ENCODE measurements at regions of chr1 and their contacts with region 1.

Region 1: DNA sequence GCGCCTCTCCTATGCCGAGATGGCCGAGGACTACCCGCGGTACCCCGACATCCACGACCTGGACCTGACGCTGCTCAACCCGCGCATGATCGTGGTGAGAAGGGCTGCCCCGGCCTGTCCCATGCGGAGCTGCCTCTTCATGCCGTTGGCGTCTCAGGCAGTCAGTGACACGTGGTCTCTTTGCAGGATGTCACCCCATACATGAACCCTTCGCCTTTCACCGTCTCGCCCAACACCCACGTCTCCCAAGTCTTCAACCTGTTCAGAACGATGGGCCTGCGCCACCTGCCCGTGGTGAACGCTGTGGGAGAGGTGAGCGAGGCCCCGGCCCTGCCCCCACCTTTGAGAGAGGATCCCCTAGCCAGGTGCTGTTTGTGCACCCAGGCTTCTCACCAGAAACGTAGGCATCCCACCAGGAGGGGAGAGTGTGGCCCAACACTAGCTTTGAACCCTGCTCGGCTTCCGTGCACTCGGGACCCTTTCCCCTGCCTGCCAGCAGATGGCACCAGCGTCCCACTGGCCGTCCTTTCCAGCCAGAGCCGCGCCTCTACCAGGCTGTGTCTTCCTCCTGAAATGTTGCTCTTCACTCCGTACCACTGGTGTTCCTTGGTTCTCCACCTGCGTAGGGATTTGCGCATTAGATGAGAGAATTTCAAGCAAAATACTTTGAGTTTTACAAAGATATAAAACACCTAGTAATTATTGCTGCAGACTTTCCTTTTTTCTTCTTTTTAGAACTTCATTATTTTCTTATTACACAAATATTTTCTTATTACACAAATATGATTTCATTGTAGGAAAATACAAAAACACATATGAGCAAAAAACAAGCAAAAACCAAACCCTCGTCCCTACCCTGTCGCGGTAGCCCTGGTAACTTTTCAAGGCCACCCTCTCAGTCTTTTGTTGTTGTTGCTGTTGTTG is 9.0 kb downstream of the NPPA start:
- DNase-seq: peak; percentile 50 to 84 (median 76)
- ATAC-seq: peak; percentile 98
- H3K4me3 ChIP-seq: no peak overlapping the region
- H3K4me3 Mint-ChIP-seq: no peak overlapping the region
- H3K27ac ChIP-seq: no peak overlapping the region
- H3K27ac Mint-ChIP-seq: no peak overlapping the region
- H3K4me1 ChIP-seq: no peaks in the 10 kb centered on the region
- H3K4me1 Mint-ChIP-seq: peaks cover 5% of the 10 kb centered on the region
- H3K27me3 ChIP-seq: no peaks in the 10 kb centered on the region
- H3K27me3 Mint-ChIP-seq: no peaks in the 10 kb centered on the region
- CTCF ChIP-seq: peak; percentile 96

Region 2: GRCh38 chr1:11893907-11894251 is 55.3 kb after region 1 on chr1:
- CTCF ChIA-PET with region 1: interaction called, 33 read pairs
- POLR2A ChIA-PET with region 1: no interaction called
- intact Hi-C with region 1: loop called (anchors 1 kb)
- DNase-seq: peak; percentile 37 to 78 (median 70)
- ATAC-seq: peak; percentile 89
- H3K4me3 ChIP-seq: no peak overlapping the region
- H3K4me3 Mint-ChIP-seq: no peak overlapping the region
- H3K27ac ChIP-seq: no peak overlapping the region
- H3K27ac Mint-ChIP-seq: no peak overlapping the region
- H3K4me1 ChIP-seq: no peaks in the 10 kb centered on the region
- H3K4me1 Mint-ChIP-seq: no peaks in the 10 kb centered on the region
- H3K27me3 ChIP-seq: peaks cover 4 to 17% of the 10 kb centered on the region in 2 experiments
- H3K27me3 Mint-ChIP-seq: peaks cover 40% of the 10 kb centered on the region
- CTCF ChIP-seq: peak; percentile 84

Region 3: GRCh38 chr1:11934302-11935056 is 95.9 kb after region 1 on chr1 and contains the start of gene PLOD1:
- CTCF ChIA-PET with region 1: no interaction called
- POLR2A ChIA-PET with region 1: no interaction called
- intact Hi-C with region 1: no loop called
- DNase-seq: peak; percentile 74 to 91 (median 85)
- ATAC-seq: peak; percentile 100
- H3K4me3 ChIP-seq: peak within 1 kb of the TSS; percentile 63 to 71
- H3K4me3 Mint-ChIP-seq: peak within 1 kb of the TSS; percentile 84
- H3K27ac ChIP-seq: peak within 1 kb of the TSS; percentile 26 to 45
- H3K27ac Mint-ChIP-seq: no peak within 1 kb of the TSS
- H3K4me1 ChIP-seq: peaks cover 11% of the 10 kb centered on the region
- H3K4me1 Mint-ChIP-seq: peaks cover 7% of the 10 kb centered on the region
- H3K27me3 ChIP-seq: no peaks in the 10 kb centered on the region
- H3K27me3 Mint-ChIP-seq: no peaks in the 10 kb centered on the region
- CTCF ChIP-seq: no peak
- total RNA-seq, gene PLOD1: 2.0 to 2.4 TPM

Region 4: DNA sequence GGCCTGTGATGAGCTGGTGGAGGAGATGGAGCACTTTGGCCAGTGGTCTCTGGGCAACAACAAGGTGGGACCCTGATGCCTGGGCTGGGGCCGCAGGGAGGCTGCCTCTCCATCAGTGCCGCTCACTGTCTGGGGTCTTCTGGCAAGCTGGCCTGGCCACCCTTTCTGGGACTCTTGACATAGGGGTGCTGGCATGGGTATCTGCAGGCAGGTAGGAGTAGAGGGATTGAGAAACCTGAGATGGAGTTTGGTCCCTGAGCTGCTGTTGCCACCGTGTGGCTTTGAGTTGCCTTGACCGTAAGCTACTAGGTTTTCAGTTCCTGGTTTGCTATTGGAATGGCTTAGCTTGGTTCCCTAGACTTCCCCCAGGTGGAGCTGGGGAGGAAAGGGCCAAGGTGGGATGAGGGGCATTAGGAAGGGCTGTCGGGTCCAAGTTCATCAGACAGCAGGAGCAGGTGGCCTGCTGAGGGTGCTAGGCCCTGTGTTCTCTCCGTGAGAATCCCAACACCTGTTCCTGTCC is 128.5 kb after region 1 on chr1:
- CTCF ChIA-PET with region 1: interaction called, 6 read pairs
- POLR2A ChIA-PET with region 1: no interaction called
- intact Hi-C with region 1: loop called (anchors 2 to 5 kb)
- DNase-seq: peak in 2 of 9 experiments; percentile 37 to 49
- ATAC-seq: no peak
- H3K4me3 ChIP-seq: no peak overlapping the region
- H3K4me3 Mint-ChIP-seq: no peak overlapping the region
- H3K27ac ChIP-seq: no peak overlapping the region
- H3K27ac Mint-ChIP-seq: no peak overlapping the region
- H3K4me1 ChIP-seq: no peaks in the 10 kb centered on the region
- H3K4me1 Mint-ChIP-seq: no peaks in the 10 kb centered on the region
- H3K27me3 ChIP-seq: no peaks in the 10 kb centered on the region
- H3K27me3 Mint-ChIP-seq: no peaks in the 10 kb centered on the region
- CTCF ChIP-seq: no peak

Region 5: DNA sequence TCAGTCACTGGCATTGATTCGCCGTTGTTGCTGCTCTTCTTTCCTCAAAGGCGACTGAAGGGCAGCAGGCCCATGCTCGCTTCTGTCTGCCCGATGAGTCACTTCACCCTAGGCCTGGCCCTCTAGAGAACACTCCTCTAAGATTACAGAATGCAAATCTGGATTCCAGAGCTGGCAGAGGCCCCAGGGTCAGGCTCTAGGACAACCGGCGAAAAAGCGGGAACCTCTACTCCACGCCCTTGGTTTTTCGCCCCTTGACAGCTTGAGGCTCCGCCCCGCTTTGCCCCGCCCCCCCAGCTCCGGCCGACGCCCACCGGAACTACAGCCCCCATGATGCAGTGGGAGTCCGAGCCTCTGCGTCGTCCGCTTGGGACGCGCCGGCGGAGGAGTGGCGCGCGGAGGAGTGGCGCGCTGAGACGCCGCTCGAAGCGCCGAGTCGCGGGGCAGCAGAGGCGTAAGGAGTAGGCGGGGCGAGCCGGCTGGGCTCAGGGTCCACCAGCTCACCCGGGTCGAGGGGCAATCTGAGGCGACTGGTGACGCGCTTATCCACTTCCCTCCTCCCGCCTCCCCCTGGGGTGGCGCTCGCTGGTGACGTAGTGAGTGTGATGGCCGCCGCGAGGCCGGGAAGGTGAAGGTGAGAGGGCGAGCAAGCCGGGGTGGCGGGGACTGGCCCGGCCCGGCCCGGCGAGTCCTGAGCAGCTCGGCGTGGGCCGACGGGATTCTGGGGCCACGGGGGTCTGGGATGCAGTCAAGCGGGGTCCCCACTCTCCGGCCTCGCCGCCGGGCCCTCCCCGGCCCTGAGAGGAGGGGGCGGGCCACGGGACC is 141.5 kb after region 1 on chr1 and contains the start of gene MFN2:
- CTCF ChIA-PET with region 1: interaction called, 11 read pairs
- POLR2A ChIA-PET with region 1: no interaction called
- intact Hi-C with region 1: loop called (anchors 1 to 5 kb)
- DNase-seq: peak; percentile 87 to 97 (median 92)
- ATAC-seq: peak; percentile 89
- H3K4me3 ChIP-seq: peak within 1 kb of the TSS; percentile 70 to 94
- H3K4me3 Mint-ChIP-seq: peak within 1 kb of the TSS; percentile 89
- H3K27ac ChIP-seq: peak within 1 kb of the TSS; percentile 91 to 95
- H3K27ac Mint-ChIP-seq: peak within 1 kb of the TSS; percentile 95
- H3K4me1 ChIP-seq: peaks cover 23% of the 10 kb centered on the region
- H3K4me1 Mint-ChIP-seq: peaks cover 43% of the 10 kb centered on the region
- H3K27me3 ChIP-seq: no peaks in the 10 kb centered on the region
- H3K27me3 Mint-ChIP-seq: no peaks in the 10 kb centered on the region
- CTCF ChIP-seq: no peak
- total RNA-seq, gene MFN2: 41.7 to 46.0 TPM

Region 6: GRCh38 chr1:12001249-12001917 is 162.8 kb after region 1 on chr1:
- CTCF ChIA-PET with region 1: no interaction called
- POLR2A ChIA-PET with region 1: no interaction called
- intact Hi-C with region 1: loop called in 1 of 2 experiments (anchors 1 kb)
- DNase-seq: peak in 4 of 9 experiments; percentile 30 to 51 (median 40)
- ATAC-seq: no peak
- H3K4me3 ChIP-seq: no peak overlapping the region
- H3K4me3 Mint-ChIP-seq: no peak overlapping the region
- H3K27ac ChIP-seq: no peak overlapping the region
- H3K27ac Mint-ChIP-seq: no peak overlapping the region
- H3K4me1 ChIP-seq: no peaks in the 10 kb centered on the region
- H3K4me1 Mint-ChIP-seq: no peaks in the 10 kb centered on the region
- H3K27me3 ChIP-seq: no peaks in the 10 kb centered on the region
- H3K27me3 Mint-ChIP-seq: no peaks in the 10 kb centered on the region
- CTCF ChIP-seq: peak; percentile 41

Region 7: DNA sequence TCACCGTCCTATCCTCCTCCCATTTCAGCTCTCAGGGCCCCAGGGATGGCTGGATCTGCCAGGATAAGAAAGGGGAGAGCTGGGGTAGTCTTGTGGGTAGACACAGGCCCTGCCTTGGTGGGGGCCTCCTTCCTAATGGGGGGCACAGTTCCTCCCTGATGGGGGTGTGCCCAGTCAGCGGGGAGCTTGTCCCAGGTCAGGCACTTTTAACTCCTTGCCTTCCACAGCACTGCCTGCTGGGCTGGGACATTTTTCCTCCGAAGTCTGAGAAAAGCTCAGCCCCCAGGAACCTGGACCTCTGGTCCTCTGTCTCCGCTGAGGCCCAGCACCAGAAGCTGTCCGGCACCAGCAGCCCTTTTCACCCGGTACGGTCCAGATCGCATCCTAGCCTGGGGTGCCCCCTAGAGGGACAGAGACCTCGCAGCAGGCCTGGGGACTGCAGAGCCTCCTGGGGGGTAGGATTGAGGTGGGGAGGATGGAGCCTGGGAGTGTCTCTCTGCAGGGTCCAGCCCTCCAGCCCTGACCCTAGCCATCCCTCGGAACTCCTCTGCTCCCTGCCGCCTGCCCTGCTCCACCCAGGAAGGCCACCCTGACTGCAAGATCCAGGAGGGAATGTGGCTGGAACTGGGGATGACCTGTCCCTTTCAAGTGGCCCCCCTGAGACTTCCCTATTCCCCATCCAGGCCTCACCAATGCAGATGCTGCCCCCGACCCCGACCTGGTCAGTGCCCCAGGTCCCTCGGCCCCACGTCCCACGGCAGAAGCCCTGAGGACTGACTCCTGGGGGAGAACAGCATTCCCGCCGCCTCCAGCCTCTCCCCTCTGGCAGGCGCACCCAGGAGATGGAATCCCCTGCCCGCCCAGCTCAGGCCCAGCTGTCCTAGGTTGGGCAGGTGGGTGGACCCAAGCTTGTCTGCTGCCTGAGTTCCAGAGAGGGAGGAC is 192.7 kb after region 1 on chr1:
- CTCF ChIA-PET with region 1: interaction called, 10 read pairs
- POLR2A ChIA-PET with region 1: no interaction called
- intact Hi-C with region 1: loop called in 1 of 2 experiments (anchors 2 kb)
- DNase-seq: peak in 5 of 9 experiments; percentile 20 to 54 (median 33)
- ATAC-seq: no peak
- H3K4me3 ChIP-seq: no peak overlapping the region
- H3K4me3 Mint-ChIP-seq: no peak overlapping the region
- H3K27ac ChIP-seq: no peak overlapping the region
- H3K27ac Mint-ChIP-seq: no peak overlapping the region
- H3K4me1 ChIP-seq: no peaks in the 10 kb centered on the region
- H3K4me1 Mint-ChIP-seq: peaks cover 1% of the 10 kb centered on the region
- H3K27me3 ChIP-seq: no peaks in the 10 kb centered on the region
- H3K27me3 Mint-ChIP-seq: no peaks in the 10 kb centered on the region
- CTCF ChIP-seq: no peak